Posterior vena cava (tissue), 2 donors: ENCODE measurements at regions of chr12 and their contacts with region 1.

Region 1: GRCh38 chr12:76348079-76348901 is at the start of gene BBS10:
- DNase-seq: peak; percentile 96
- total RNA-seq, gene BBS10: 9.1 to 9.8 TPM

Region 2: GRCh38 chr12:76268267-76268666 is 80.0 kb before region 1 on chr12:
- intact Hi-C with region 1: loop called in 1 of 2 experiments (anchors 2 kb)
- DNase-seq: no peak

Region 3: GRCh38 chr12:76559400-76560085 is 211.3 kb after region 1 on chr12 and contains the start of gene OSBPL8:
- intact Hi-C with region 1: loop called in 1 of 2 experiments (anchors 5 kb)
- DNase-seq: peak; percentile 98
- total RNA-seq, gene OSBPL8: 72.7 to 87.3 TPM